Ascending aorta (tissue), 2 donors: ENCODE measurements at regions of chr18 and their contacts with region 1.

Region 1: DNA sequence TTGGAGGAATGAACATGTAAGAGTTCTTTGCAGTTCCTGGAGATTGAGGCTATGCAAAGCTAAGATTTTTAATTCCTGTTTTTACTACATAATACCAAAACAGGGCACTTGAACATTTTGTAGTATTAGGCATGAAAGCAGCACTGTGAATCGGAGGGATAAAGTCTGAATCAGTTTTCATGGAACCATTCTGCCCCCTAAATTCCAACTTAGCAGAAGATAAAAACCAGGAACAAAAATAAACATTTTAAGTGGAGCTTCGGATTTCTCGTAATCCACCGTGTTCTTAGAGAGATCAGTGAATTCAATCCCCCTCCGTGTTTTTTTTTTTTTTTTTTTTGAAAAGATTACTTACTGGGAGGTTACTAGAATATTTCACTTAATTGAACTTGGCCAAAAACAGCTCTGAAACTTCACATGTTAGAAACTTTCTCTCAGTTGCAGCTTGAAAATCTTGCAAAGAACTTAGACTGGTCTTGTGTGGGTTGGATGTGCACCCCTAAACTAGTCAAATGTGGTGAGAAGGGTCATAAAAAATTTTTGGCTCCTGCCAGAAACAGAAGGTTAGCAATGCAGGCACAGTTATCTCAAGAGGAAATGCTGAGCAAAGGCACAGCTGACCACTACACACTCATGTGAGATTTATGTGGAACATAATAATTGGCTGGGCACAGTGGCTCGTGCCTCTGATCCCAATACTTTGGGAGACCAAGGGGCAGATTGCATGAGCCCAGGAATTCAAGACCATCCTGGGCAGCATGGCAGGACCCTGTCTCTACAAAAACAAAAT is 145.4 kb upstream of the RNF152 start:
- DNase-seq: no peak
- H3K4me3 ChIP-seq: no peak overlapping the region
- H3K27ac ChIP-seq: peak overlapping the region; percentile 20 to 40
- H3K4me1 ChIP-seq: peaks cover 0 to 8% of the 10 kb centered on the region in 2 donors
- H3K27me3 ChIP-seq: no peaks in the 10 kb centered on the region
- CTCF ChIP-seq: peak in 1 of 3 experiments; percentile 33

Region 2: GRCh38 chr18:61248589-61248988 is 789.6 kb before region 1 on chr18:
- intact Hi-C with region 1: no loop called
- DNase-seq: no peak
- H3K4me3 ChIP-seq: no peak overlapping the region
- H3K27ac ChIP-seq: no peak overlapping the region
- H3K4me1 ChIP-seq: no peaks in the 10 kb centered on the region
- H3K27me3 ChIP-seq: no peaks in the 10 kb centered on the region
- CTCF ChIP-seq: no peak

Region 3: DNA sequence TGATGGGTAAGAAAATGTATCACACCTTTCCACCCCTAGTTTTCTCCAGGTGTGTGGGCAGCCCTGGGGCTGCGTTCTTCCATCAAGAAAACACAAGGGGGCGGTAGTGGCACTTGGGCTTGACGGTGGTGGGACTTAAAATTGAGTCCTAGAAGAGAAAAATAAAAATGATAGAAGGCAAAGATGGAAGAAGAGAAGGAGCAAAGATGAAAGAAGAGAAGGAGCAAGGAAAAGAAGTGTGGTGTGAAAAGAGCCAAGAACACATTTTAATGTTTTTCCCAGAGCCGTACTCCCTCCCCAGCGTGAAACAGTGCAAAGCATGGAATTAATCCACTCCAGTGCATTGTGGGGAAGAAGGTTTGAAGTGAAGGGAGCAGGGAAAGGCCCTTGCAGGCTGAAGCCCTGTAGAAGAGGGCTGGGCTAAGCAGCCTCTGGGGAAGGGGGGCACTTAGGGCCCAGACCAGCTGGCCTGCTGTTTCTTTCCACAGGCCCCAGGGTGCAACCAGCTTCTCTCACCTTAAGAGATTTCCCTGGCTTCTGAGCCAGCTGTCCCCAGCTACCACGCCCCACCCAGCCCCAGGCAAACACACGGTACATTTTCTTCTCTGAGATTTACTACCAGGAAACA is 402.2 kb before region 1 on chr18:
- intact Hi-C with region 1: loop called (anchors 5 kb)
- DNase-seq: peak in 1 of 2 donors; percentile 72
- H3K4me3 ChIP-seq: no peak overlapping the region
- H3K27ac ChIP-seq: no peak overlapping the region
- H3K4me1 ChIP-seq: peaks cover 0 to 6% of the 10 kb centered on the region in 2 donors
- H3K27me3 ChIP-seq: no peaks in the 10 kb centered on the region
- CTCF ChIP-seq: peak; percentile 60 to 93 (median 84)